ENCODE measurements at regions of chr6 and their contacts with region 1.

Region 1: GRCh38 chr6:122839477-122839876 is 50.4 kb downstream of the SMPDL3A start:
- DNase-seq: peak; percentile 64
- ATAC-seq: peak; percentile 97
- H3K4me3 ChIP-seq: no peak overlapping the region
- H3K27ac ChIP-seq: no peak overlapping the region
- H3K4me1 ChIP-seq: no peaks in the 10 kb centered on the region
- H3K27me3 ChIP-seq: peaks cover 0 to 14% of the 10 kb centered on the region in 2 experiments; a peak in 2 of 5 replicates
- CTCF ChIP-seq: peak; percentile 87
- EP300 ChIP-seq: no peak
- POLR2A ChIP-seq: no peak
- RAD21 ChIP-seq: peak; percentile 66

Region 2: DNA sequence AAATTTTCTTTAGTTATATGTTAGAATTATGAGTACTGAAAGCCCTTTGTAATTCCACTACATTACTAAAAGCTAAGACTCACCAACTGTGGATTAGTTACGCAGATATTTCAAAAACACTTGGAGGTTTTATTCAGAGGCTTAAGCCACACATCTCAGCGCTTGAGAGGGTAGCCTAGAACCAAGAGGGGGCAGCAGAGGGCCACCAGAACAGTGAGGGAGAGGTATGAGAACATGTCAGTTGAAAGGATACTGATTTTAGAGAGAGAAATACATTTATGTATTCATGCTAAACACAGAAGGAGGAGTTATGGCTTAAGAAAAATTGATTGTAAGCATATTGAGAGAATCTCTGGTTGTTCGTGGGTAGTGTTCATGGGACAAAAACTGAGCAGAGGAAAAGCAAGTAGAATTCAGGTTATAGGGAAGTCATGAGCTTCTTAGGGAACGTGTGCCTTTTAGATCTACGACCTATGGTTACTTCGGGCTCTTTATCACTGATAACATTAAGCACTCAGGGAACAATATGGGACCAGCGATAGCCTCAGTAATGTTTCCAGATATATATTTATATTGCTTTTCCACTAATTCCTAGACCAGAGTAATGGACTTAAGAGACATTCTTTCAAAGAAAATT is 347.4 kb before region 1 on chr6:
- CTCF ChIA-PET with region 1: interaction called, 6 read pairs
- POLR2A ChIA-PET with region 1: no interaction called
- in situ Hi-C with region 1: loop called (anchors 25 kb)
- intact Hi-C with region 1: loop called (anchors 5 kb)
- DNase-seq: peak; percentile 68
- ATAC-seq: peak; percentile 100
- H3K4me3 ChIP-seq: no peak overlapping the region
- H3K27ac ChIP-seq: no peak overlapping the region
- H3K4me1 ChIP-seq: no peaks in the 10 kb centered on the region
- H3K27me3 ChIP-seq: no peaks in the 10 kb centered on the region
- CTCF ChIP-seq: peak; percentile 89
- EP300 ChIP-seq: no peak
- POLR2A ChIP-seq: no peak
- RAD21 ChIP-seq: peak; percentile 67

Region 3: DNA sequence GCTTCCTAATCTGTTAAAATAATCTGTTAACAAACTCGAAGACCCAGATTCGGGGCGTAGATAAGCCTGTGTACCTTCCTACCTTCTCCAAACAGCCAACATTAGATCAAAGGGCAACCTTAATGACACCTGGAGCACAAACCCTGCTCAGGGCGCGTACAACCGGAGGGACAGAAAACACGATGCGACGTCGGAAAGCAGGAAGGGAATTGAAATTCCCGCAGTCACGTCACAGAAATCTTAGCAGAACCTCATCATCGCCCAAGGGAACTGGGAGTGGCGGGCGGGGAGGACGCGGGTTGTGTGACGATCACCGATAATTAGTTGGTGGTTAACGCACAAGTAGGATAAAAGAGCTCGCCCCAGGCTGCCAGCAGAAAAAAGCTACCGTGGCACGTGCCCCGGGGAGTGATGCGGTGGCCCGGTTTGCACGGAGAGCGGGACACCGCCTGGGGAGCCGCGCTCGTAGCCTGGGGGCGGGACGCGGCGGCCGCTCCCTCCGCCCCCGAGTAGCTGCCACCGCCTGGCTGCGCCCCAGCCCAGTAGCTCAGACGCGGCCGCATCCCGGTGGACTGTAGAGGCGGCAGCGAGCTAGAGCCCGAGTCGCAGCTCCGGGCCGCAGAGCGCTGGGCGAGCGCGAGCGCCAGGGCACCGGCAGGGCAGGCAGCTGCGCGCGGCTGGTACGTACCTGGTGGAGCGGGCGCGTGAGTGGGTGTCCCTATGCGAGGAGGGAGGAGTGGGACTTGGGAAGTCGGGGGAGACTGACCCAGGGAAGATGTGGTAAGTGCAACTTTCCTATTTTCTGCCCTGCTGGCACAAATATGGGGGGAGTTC is 229.4 kb before region 1 on chr6 and contains the start of gene PKIB:
- CTCF ChIA-PET with region 1: no interaction called
- POLR2A ChIA-PET with region 1: no interaction called
- in situ Hi-C with region 1: no loop called
- intact Hi-C with region 1: loop called (anchors 10 kb)
- DNase-seq: peak; percentile 64
- ATAC-seq: peak; percentile 100
- H3K4me3 ChIP-seq: peak within 1 kb of the TSS; percentile 45 to 72 (median 58)
- H3K27ac ChIP-seq: no peak within 1 kb of the TSS
- H3K4me1 ChIP-seq: peaks cover 18% of the 10 kb centered on the region
- H3K27me3 ChIP-seq: peaks cover 4 to 20% of the 10 kb centered on the region in 2 experiments; a peak in 4 of 5 replicates
- CTCF ChIP-seq: peak; percentile 69
- EP300 ChIP-seq: no peak
- POLR2A ChIP-seq: no peak
- RAD21 ChIP-seq: peak; percentile 73
- total RNA-seq, gene PKIB: 1.5 and 2.2 TPM in 2 replicates

Region 4: DNA sequence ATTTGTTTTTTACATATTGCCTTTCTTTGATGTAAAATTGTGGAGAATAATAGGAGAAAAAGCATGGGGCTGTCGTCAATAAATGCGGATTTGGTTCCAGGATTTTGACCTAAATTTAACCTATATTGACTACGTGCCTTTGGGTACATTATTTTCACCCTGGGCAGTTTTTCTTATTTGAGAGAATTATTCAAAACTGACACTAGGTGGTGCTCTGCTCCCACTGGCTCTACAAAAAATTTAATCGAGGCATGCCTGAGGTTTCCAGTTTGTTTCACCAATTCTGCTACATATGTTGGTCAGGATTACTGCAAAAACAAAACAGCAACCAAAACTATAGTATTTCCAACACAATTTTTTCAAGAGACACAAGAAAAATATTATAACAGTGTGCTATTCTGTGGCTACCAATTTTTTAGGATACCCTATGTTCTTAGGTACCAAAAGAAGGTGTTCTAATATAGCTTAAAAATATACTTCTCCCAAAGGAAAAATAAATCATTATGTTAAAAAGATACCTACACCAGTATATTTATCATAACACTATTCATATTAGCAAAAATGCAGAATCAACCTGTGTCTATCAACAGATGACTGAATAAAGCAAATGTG is 108.6 kb before region 1 on chr6:
- CTCF ChIA-PET with region 1: interaction called, 119 read pairs
- POLR2A ChIA-PET with region 1: no interaction called
- in situ Hi-C with region 1: loop called (anchors 5 kb)
- intact Hi-C with region 1: loop called (anchors 1 kb)
- DNase-seq: peak; percentile 41
- ATAC-seq: peak; percentile 71
- H3K4me3 ChIP-seq: no peak overlapping the region
- H3K27ac ChIP-seq: no peak overlapping the region
- H3K4me1 ChIP-seq: no peaks in the 10 kb centered on the region
- H3K27me3 ChIP-seq: peaks cover 0 to 11% of the 10 kb centered on the region in 2 experiments; a peak in 2 of 5 replicates
- CTCF ChIP-seq: peak; percentile 78
- EP300 ChIP-seq: no peak
- POLR2A ChIP-seq: no peak
- RAD21 ChIP-seq: peak; percentile 84

Region 5: DNA sequence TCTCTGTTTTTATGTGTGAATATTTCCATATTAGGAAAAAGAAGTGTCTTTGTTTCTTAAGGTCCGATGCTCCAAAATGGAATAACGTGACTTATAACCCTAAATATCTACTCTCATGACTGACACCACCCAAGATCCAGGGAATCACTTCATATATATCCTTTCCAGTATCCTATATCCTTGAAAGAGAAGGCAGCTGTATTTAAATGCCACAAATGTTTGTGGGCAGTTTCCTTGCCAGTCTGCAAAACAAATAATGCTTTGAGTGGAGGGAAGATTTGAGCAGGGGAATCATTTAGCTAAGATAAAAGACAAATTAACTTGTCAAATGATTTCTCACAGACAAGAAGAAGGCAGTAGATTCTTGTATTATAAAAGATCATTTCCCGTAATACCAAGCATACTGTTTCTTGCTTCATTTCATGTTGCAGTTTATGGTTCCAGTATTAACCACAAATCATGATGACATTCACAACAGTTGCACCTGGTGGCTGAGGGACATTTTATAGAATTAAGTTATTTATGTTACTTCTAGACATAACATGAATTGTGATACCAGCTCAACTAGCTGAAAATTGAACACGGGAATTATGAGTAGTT is 89.9 kb before region 1 on chr6:
- CTCF ChIA-PET with region 1: interaction called, 33 read pairs
- POLR2A ChIA-PET with region 1: interaction called, 5 read pairs
- in situ Hi-C with region 1: no loop called
- intact Hi-C with region 1: loop called (anchors 1 kb)
- DNase-seq: no peak
- ATAC-seq: no peak
- H3K4me3 ChIP-seq: no peak overlapping the region
- H3K27ac ChIP-seq: no peak overlapping the region
- H3K4me1 ChIP-seq: no peaks in the 10 kb centered on the region
- H3K27me3 ChIP-seq: peaks cover 0 to 7% of the 10 kb centered on the region in 2 experiments; a peak in 2 of 5 replicates
- CTCF ChIP-seq: no peak
- EP300 ChIP-seq: no peak
- POLR2A ChIP-seq: no peak
- RAD21 ChIP-seq: no peak

Region 6: DNA sequence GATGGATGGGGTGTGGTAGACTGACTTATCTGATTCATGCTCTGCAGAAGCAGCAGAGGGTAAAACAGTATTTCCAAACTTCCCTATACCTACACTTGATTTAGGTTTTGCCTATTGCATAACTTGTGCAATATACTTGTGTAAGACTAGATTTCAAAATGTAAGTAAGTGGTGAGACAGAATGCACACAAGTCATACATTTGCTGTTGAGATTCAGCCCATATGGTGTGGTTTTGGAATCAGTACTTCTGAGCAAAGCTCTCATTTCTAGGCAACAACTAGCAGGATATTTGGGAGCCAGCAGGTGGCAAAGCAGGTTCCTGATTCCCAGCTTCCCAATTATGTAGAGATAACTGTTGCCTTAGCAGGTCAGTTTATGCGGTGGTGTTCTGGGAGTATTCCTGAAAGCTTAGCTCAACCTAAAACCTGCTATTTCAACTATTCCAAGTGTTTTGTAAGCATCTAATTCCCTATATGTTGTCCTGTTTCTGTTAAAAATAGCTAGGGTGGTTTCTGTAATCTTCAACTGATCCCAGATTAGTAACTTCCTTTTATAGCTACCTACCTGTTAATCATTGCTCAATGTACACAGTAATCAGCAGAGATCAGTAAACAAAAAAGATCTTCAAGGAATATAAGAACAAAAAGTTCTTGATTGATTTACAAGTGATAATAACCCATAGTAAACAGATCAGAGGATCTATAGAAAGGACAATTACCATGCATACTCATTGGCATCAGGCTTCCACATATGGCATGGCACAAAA is 68.5 kb before region 1 on chr6:
- CTCF ChIA-PET with region 1: interaction called, 59 read pairs
- POLR2A ChIA-PET with region 1: no interaction called
- in situ Hi-C with region 1: no loop called
- intact Hi-C with region 1: loop called (anchors 1 kb)
- DNase-seq: peak; percentile 25
- ATAC-seq: peak; percentile 93
- H3K4me3 ChIP-seq: no peak overlapping the region
- H3K27ac ChIP-seq: no peak overlapping the region
- H3K4me1 ChIP-seq: peaks cover 9% of the 10 kb centered on the region
- H3K27me3 ChIP-seq: no peaks in the 10 kb centered on the region
- CTCF ChIP-seq: peak; percentile 71
- EP300 ChIP-seq: no peak
- POLR2A ChIP-seq: no peak
- RAD21 ChIP-seq: peak; percentile 62

Region 7: DNA sequence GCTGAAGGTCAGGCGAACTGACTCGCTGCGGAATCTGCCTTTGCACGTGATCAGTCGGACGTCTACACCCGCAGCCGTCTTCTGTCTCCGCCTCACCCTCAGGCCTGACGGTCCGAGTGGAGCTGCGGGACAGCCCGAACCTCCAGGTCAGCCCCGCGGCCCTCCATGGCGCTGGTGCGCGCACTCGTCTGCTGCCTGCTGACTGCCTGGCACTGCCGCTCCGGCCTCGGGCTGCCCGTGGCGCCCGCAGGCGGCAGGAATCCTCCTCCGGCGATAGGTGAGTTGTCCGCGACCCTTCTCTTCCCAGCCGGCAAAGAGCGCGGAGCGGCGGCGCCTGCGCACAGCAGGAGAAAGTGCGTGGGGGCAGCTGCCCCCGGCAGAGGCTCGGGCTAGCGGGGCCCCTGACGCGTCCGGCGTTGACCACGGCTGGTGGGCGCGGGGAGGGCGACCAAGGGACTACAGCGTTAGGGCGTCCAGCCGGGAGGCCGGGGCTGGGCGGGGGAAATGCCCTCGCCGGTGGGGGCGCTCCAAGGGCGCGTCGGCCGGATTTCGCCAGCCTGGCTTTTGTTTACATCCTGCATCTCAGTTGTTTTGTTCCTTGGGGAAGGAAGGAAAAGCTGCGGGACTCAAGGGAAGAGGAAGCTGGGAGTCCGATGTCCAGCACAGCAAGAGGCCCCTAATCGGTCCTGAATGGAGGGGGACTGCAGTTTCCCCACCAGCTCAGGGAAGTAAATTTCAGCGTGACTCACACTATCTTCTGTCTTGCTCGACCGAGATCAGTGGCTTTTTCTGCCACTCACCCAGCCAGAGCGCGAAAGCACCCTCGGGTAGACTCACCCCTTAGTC is 50.1 kb before region 1 on chr6 and contains the start of gene SMPDL3A:
- CTCF ChIA-PET with region 1: interaction called, 13 read pairs
- POLR2A ChIA-PET with region 1: interaction called, 18 read pairs
- in situ Hi-C with region 1: loop called (anchors 5 kb)
- intact Hi-C with region 1: loop called (anchors 1 kb)
- DNase-seq: peak; percentile 76
- ATAC-seq: peak; percentile 88
- H3K4me3 ChIP-seq: peak within 1 kb of the TSS; percentile 73 to 95 (median 77)
- H3K27ac ChIP-seq: peak within 1 kb of the TSS; percentile 91
- H3K4me1 ChIP-seq: peaks cover 44% of the 10 kb centered on the region
- H3K27me3 ChIP-seq: no peaks in the 10 kb centered on the region; a peak in 1 of 5 replicates
- CTCF ChIP-seq: peak; percentile 91
- EP300 ChIP-seq: peak in 1 of 2 experiments; percentile 13; a peak in 1 of 4 replicates
- POLR2A ChIP-seq: peak; percentile 55 to 72
- RAD21 ChIP-seq: peak; percentile 90
- total RNA-seq, gene SMPDL3A: 6.4 and 7.8 TPM in 2 replicates

Region 8: GRCh38 chr6:122861594-122861993 is 22.1 kb after region 1 on chr6:
- CTCF ChIA-PET with region 1: no interaction called
- POLR2A ChIA-PET with region 1: no interaction called
- in situ Hi-C with region 1: no loop called
- intact Hi-C with region 1: no loop called
- DNase-seq: no peak
- ATAC-seq: no peak
- H3K4me3 ChIP-seq: no peak overlapping the region
- H3K27ac ChIP-seq: no peak overlapping the region
- H3K4me1 ChIP-seq: no peaks in the 10 kb centered on the region
- H3K27me3 ChIP-seq: no peaks in the 10 kb centered on the region
- CTCF ChIP-seq: no peak
- EP300 ChIP-seq: no peak
- POLR2A ChIP-seq: no peak
- RAD21 ChIP-seq: no peak

Region 9: DNA sequence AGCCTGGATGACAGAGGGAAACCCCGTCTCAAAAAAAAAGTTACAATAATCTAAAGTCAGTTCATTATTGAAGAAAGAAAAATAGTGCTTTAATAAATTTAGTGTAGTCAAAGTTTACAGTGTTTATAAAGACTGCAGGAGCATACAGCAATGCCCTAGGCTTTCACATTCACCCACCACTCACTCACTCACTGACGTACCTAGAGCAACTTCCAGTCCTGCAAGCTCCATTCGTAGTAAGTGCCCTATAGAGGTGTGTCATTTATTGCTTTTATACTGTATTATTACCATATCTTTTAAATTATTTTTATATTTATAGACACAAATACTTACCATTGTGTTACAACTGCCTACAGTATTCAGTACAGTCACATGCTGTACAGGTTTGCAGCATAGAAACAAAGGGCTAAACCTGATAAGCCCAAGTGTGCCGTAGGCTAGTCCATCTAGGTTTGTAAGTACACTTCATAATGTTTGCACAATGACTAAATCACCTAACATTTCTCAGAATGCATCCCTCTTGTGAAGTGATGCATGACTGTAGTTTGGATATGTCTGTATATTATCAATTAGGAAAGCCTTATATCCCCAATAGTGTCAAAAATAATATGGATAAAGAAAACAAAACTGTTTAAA is 279.2 kb after region 1 on chr6:
- CTCF ChIA-PET with region 1: no interaction called
- POLR2A ChIA-PET with region 1: no interaction called
- in situ Hi-C with region 1: no loop called
- intact Hi-C with region 1: no loop called
- DNase-seq: no peak
- ATAC-seq: no peak
- H3K4me3 ChIP-seq: no peak overlapping the region
- H3K27ac ChIP-seq: no peak overlapping the region
- H3K4me1 ChIP-seq: no peaks in the 10 kb centered on the region
- H3K27me3 ChIP-seq: no peaks in the 10 kb centered on the region
- CTCF ChIP-seq: no peak
- EP300 ChIP-seq: no peak
- POLR2A ChIP-seq: no peak
- RAD21 ChIP-seq: no peak